ENCODE measurements at regions of chr4 and their contacts with region 1.

Region 1: DNA sequence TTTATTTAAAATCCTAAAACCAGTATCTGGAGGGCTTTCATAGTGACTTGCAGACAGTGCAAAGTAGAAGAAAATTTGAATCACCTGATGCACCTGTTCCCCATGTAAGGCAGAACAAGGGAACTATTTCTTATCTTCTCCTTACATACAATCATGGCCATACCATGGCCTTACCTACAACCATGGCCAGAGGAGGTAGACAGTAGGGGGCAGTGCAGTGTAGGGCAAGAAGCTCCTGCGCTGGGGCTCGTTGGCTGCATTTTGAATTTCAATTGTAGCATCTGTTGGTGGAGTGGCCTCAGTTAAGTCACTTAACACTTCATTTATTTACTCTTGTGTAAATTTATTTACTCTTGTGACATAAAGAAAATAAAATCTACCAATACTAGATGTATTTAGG is 33.0 kb downstream of the GALNTL6 start:
- DNase-seq: peak; percentile 31
- ATAC-seq: peak; percentile 83
- H3K4me3 ChIP-seq: no peak overlapping the region
- H3K27ac ChIP-seq: no peak overlapping the region
- H3K4me1 ChIP-seq: no peaks in the 10 kb centered on the region
- H3K27me3 ChIP-seq: no peaks in the 10 kb centered on the region; a peak in 1 of 5 replicates
- CTCF ChIP-seq: peak; percentile 73
- EP300 ChIP-seq: no peak
- POLR2A ChIP-seq: no peak
- RAD21 ChIP-seq: no peak

Region 2: GRCh38 chr4:172035562-172035961 is 189.3 kb after region 1 on chr4:
- CTCF ChIA-PET with region 1: no interaction called
- POLR2A ChIA-PET with region 1: no interaction called
- in situ Hi-C with region 1: no loop called
- intact Hi-C with region 1: loop called (anchors 1 kb)
- DNase-seq: no peak
- ATAC-seq: no peak
- H3K4me3 ChIP-seq: no peak overlapping the region
- H3K27ac ChIP-seq: no peak overlapping the region
- H3K4me1 ChIP-seq: no peaks in the 10 kb centered on the region
- H3K27me3 ChIP-seq: no peaks in the 10 kb centered on the region
- CTCF ChIP-seq: no peak
- EP300 ChIP-seq: no peak
- POLR2A ChIP-seq: no peak
- RAD21 ChIP-seq: no peak

Region 3: DNA sequence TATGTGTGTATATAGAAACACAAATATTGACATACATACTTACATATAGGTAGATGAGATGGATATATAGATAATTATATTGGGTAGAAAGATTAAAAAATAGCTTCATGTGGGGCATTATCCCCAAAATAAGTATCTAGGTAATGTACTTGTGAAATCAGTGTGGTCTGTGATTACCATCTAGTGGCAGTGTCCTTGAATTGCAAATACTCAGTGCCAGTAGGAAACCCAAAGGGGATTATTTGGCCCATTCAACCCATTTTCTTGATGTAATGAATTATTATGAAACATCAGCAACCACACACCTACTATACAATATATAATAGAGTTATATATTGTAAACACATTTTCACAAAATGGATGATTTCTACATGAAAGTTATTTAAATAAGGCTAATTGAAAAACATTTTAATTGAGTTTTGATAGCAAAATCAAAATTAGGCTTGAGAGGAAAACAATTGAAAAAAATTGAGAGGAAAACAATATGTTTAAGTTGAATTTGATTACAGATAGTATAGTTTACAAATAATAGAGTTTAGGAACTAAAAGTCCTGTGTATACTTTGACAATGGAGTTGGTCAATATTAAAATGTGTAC is 356.3 kb after region 1 on chr4:
- CTCF ChIA-PET with region 1: interaction called, 10 read pairs
- POLR2A ChIA-PET with region 1: no interaction called
- in situ Hi-C with region 1: loop called (anchors 25 kb)
- intact Hi-C with region 1: loop called (anchors 1 kb)
- DNase-seq: peak; percentile 10
- ATAC-seq: peak; percentile 32; the same call in 1 of the 3 replicates
- H3K4me3 ChIP-seq: no peak overlapping the region
- H3K27ac ChIP-seq: no peak overlapping the region
- H3K4me1 ChIP-seq: no peaks in the 10 kb centered on the region
- H3K27me3 ChIP-seq: no peaks in the 10 kb centered on the region
- CTCF ChIP-seq: peak; percentile 64
- EP300 ChIP-seq: no peak
- POLR2A ChIP-seq: no peak
- RAD21 ChIP-seq: no peak

Region 4: DNA sequence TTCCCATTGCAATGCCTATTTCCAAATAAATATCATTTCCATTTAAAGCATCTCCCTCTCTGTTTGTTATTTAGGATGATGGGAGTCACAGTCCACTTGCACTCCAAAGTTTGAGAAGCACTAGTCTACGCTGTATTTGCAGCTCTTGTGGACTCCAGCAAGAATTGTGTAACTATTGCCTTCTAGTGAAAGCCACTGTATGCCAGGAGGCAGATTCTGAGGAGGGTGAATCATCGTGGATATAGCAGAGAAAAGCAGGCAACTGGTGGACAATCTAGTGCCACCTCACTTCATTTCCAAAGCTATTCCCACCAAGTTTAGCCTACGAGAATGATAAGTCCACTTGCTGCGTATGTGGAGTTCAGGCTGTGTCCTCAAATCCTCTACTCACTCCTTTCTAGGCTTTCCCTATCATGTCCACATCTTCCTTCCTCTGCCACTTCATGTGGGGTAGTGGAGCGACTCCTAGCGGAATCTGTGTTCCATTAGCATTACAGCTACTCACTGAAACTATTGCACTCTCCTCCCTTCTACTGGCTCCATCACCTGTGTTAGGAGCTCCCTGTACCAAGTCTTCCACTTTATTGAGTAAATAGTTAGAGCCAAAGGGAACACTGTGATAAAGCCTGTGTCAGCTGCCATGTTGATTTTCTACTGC is 820.6 kb after region 1 on chr4:
- CTCF ChIA-PET with region 1: no interaction called
- POLR2A ChIA-PET with region 1: no interaction called
- in situ Hi-C with region 1: no loop called
- intact Hi-C with region 1: loop called (anchors 2 kb)
- DNase-seq: no peak
- ATAC-seq: no peak
- H3K4me3 ChIP-seq: no peak overlapping the region
- H3K27ac ChIP-seq: no peak overlapping the region
- H3K4me1 ChIP-seq: no peaks in the 10 kb centered on the region
- H3K27me3 ChIP-seq: no peaks in the 10 kb centered on the region; a peak in 1 of 5 replicates
- CTCF ChIP-seq: peak; percentile 23; the same call in 1 of the 2 replicates
- EP300 ChIP-seq: no peak
- POLR2A ChIP-seq: no peak
- RAD21 ChIP-seq: no peak

Region 5: GRCh38 chr4:172826346-172826745 is 980.1 kb after region 1 on chr4:
- CTCF ChIA-PET with region 1: no interaction called
- POLR2A ChIA-PET with region 1: no interaction called
- in situ Hi-C with region 1: loop called (anchors 10 kb)
- intact Hi-C with region 1: no loop called
- DNase-seq: no peak
- ATAC-seq: no peak
- H3K4me3 ChIP-seq: no peak overlapping the region
- H3K27ac ChIP-seq: no peak overlapping the region
- H3K4me1 ChIP-seq: no peaks in the 10 kb centered on the region
- H3K27me3 ChIP-seq: no peaks in the 10 kb centered on the region
- CTCF ChIP-seq: no peak
- EP300 ChIP-seq: no peak
- POLR2A ChIP-seq: no peak
- RAD21 ChIP-seq: no peak